ENCODE measurements at regions of chr12 and their contacts with region 1.

Region 1: DNA sequence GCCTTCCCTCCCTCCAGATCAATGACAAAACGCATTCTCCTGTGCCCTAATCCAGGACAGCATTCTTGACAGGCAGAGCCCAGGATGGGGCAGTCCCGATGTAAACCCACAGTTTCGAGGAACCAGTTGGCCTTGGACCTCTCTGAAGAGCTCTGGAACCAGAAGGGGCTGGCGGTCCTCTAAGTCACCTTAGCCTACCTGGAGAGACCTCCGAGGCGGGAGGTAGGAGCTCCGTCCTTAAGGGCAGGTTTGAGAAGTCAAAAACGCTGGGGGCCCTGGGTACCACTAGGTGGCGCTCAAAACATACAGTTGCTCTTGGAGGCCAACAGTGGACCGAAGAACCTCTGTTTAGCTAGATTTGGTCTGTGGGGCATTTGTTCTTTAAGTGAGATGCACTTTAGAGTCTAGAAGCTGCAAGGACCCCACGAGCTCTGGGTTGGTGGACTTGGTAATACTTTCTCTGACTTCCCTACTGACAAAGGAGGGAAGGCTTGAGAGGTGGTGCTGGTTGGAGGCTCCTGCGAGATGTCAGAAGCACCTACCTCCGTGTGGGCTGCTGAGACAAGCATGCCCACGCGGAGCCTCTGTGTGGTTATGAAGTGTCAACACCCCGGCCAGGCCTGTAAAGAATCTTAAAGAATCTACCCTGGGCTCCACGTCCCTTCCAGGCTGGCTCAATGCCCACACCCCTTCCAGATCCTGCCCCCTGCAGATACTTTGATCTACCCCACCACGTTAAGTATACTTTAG is 74.8 kb upstream of the CHST11 start:
- DNase-seq: peak; percentile 82
- CTCF ChIP-seq: peak; percentile 88

Region 2: GRCh38 chr12:104286538-104287482 is 95.1 kb before region 1 on chr12:
- CTCF ChIA-PET with region 1: no interaction called
- POLR2A ChIA-PET with region 1: no interaction called
- DNase-seq: peak; percentile 90
- CTCF ChIP-seq: no peak

Region 3: GRCh38 chr12:104371043-104371870 is 10.6 kb before region 1 on chr12:
- CTCF ChIA-PET with region 1: interaction called, 27 read pairs
- POLR2A ChIA-PET with region 1: no interaction called
- DNase-seq: no peak
- CTCF ChIP-seq: no peak

Region 4: GRCh38 chr12:104439137-104439536 is 57.2 kb after region 1 on chr12:
- CTCF ChIA-PET with region 1: interaction called, 21 read pairs
- POLR2A ChIA-PET with region 1: no interaction called
- DNase-seq: no peak
- CTCF ChIP-seq: no peak

Region 5: GRCh38 chr12:104671407-104672098 is 289.6 kb after region 1 on chr12:
- CTCF ChIA-PET with region 1: interaction called, 15 read pairs
- POLR2A ChIA-PET with region 1: no interaction called
- DNase-seq: peak; percentile 79
- CTCF ChIP-seq: no peak

Region 6: GRCh38 chr12:104720339-104721038 is 338.6 kb after region 1 on chr12:
- CTCF ChIA-PET with region 1: interaction called, 12 read pairs
- POLR2A ChIA-PET with region 1: no interaction called
- DNase-seq: peak; percentile 57
- CTCF ChIP-seq: no peak

Region 7: GRCh38 chr12:104834607-104835006 is 452.7 kb after region 1 on chr12:
- CTCF ChIA-PET with region 1: interaction called, 11 read pairs
- POLR2A ChIA-PET with region 1: no interaction called
- DNase-seq: no peak
- CTCF ChIP-seq: no peak

Region 8: GRCh38 chr12:105067511-105068031 is 685.7 kb after region 1 on chr12:
- CTCF ChIA-PET with region 1: interaction called, 12 read pairs
- POLR2A ChIA-PET with region 1: no interaction called
- DNase-seq: no peak
- CTCF ChIP-seq: no peak

Measured in GM10248 (cell line).